ENCODE measurements at regions of chr12 and their contacts with region 1.

Region 1: DNA sequence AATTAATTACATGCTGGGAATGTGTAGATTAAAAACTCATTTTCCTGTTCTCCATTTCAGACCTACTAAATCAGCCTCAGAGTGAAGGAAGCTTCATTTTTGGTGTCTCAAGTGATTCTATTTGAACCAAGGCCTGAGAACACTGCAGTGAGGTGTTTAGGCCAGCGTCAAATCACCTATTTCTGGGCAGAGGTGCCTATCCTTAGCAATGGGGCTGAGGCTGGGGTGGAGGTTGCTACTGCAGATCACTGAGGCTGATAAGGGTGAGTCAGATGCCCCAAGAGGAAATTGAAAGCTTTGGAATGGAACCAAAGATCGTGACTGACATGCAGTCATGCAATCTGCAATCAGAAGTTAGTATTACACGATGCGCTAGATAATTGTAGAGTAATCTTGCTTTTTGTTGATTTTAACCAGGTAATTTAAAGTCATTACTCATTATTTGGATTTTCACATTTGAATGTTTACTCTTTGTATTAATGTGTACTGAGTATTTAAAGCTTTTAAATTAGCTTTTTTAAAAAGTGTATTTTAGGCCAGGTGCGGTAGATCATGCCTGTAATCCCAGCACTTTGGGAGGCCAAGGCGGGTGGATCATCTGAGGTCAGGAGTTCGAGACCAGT is 4.4 kb downstream of the TXNRD1 start:
- DNase-seq: no peak
- H3K4me3 ChIP-seq: no peak overlapping the region
- H3K27ac ChIP-seq: peak overlapping the region; percentile 88
- H3K4me1 ChIP-seq: peaks cover 38% of the 10 kb centered on the region
- H3K27me3 ChIP-seq: no peaks in the 10 kb centered on the region
- CTCF ChIP-seq: no peak

Region 2: DNA sequence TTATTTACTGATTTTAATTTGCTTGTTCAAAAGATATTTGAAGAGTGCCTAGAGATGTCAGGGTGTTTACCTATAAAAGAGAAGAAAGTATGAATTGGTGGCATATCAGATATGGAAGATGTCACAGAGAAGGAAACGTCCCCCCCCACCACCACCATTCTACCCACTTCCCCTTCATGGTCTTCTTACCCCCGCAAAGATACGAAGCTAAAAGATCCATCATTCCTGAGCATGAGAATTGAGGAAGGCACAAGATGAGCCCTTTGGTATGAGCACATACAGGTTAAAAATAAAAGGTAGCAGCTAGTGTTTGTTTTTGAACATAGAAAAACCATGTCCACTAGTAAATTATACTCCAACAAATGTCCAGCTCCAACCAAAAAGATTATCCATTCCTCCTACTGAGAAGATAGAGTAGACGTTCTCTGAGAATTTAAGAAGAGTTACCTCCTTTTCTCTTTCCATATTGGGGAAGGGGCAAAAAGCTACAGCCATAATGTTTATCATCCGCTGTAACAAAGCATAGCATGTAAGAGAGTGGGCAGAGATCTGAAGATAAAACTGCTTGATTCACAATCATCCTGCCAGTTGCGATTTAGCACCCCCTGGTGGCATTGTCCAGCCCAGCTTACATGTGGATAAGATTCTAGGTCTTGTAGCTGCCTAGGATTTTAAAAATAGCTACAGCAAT is 111.1 kb before region 1 on chr12:
- intact Hi-C with region 1: no loop called
- DNase-seq: peak; percentile 70
- H3K4me3 ChIP-seq: no peak overlapping the region
- H3K27ac ChIP-seq: no peak overlapping the region
- H3K4me1 ChIP-seq: peaks cover 25% of the 10 kb centered on the region
- H3K27me3 ChIP-seq: no peaks in the 10 kb centered on the region
- CTCF ChIP-seq: peak; percentile 89

Region 3: DNA sequence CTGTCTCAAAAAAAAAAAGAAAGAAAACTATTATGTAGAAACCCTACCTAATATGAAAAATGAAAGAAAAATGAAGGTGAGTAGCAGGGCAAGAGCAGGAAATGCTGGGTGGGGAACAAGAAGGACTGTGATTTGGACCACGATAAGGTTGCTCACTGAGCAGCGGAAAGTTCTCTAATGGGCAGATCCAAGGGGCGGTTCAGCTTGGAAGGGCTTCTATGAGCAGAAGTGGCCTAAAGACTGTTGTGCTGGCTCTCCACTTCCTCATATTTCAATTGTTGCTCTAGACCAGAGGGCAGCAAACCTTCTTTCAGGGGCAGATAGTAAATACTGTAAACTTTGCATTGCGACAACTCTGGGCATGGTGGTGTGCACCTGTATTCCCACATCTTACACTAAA is 65.7 kb before region 1 on chr12:
- intact Hi-C with region 1: no loop called
- DNase-seq: no peak
- H3K4me3 ChIP-seq: no peak overlapping the region
- H3K27ac ChIP-seq: no peak overlapping the region
- H3K4me1 ChIP-seq: no peaks in the 10 kb centered on the region
- H3K27me3 ChIP-seq: no peaks in the 10 kb centered on the region
- CTCF ChIP-seq: no peak

Region 4: DNA sequence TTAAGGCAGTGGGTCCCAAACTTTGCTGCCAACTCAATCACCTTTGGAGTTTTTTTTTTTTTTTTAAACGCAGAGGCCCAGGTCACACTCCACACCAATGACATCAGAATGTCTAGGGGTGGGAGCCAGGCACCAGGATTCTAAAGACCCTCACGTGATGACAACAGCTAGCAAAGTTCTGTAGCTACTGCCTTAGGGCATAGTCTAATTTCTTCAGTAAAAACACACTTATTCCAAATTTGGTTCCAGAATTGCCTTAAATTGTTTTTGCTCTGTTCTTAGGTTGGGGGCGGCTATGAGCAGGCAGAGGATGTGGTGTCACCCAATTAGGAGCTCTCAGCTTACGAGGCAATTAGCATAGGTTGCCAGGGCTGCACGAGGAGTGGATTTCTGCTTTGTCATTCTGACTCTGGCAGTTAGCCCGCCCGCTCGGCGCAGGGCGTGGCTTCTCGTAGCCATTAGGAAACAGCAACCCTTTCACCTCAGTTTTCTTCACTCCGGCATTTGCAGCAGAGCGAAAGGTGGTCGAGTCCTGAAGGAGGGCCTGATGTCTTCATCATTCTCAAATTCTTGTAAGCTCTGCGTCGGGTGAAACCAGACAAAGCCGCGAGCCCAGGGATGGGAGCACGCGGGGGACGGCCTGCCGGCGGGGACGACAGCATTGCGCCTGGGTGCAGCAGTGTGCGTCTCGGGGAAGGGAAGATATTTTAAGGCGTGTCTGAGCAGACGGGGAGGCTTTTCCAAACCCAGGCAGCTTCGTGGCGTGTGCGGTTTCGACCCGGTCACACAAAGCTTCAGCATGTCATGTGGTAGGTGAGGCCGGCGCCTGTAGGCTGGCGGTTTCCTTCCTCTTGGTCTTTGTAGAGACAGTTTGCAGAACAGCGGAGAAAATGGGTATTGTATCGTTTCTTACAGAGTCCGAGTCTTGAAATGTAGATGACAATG is 66.8 kb after region 1 on chr12:
- intact Hi-C with region 1: loop called (anchors 10 kb)
- DNase-seq: peak; percentile 94
- H3K4me3 ChIP-seq: peak overlapping the region; percentile 72
- H3K27ac ChIP-seq: peak overlapping the region; percentile 94
- H3K4me1 ChIP-seq: peaks cover 49% of the 10 kb centered on the region
- H3K27me3 ChIP-seq: no peaks in the 10 kb centered on the region
- CTCF ChIP-seq: no peak

Region 5: GRCh38 chr12:104858611-104859543 is 638.9 kb after region 1 on chr12:
- intact Hi-C with region 1: no loop called
- DNase-seq: no peak
- H3K4me3 ChIP-seq: no peak overlapping the region
- H3K27ac ChIP-seq: peak overlapping the region; percentile 61
- H3K4me1 ChIP-seq: peaks cover 33% of the 10 kb centered on the region
- H3K27me3 ChIP-seq: no peaks in the 10 kb centered on the region
- CTCF ChIP-seq: no peak